ENCODE measurements at regions of chr4 and their contacts with region 1.

Region 1: DNA sequence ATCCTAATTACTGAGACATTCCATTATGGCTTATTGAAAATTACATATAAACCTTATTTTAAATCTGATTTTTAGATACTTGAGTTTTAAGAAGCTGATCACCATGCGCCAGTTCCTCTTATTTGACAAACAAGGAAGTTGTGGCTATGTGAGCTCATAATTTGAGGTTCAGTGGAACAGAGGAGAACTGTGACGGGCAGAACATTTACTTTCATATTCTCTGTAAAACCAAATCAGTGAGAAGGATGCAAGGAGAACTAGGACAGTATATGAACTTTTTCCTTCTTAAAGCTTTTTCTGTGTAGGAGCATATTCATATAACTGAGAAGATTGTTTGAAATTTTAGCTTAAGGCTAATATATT is 25.3 kb downstream of the STIM2 start:
- DNase-seq: peak in 6 of 14 experiments; percentile 10 to 92 (median 60)
- ATAC-seq: peak; percentile 76
- H3K4me3 ChIP-seq: peak overlapping the region; percentile 40
- H3K4me3 Mint-ChIP-seq: peak overlapping the region; percentile 72
- H3K27ac ChIP-seq: peak overlapping the region; percentile 63 to 89
- H3K27ac Mint-ChIP-seq: peak overlapping the region; percentile 92
- H3K4me1 ChIP-seq: peaks cover 25% of the 10 kb centered on the region
- H3K4me1 Mint-ChIP-seq: peaks cover 80% of the 10 kb centered on the region
- H3K27me3 ChIP-seq: no peaks in the 10 kb centered on the region
- H3K27me3 Mint-ChIP-seq: no peaks in the 10 kb centered on the region
- CTCF ChIP-seq: no peak

Region 2: DNA sequence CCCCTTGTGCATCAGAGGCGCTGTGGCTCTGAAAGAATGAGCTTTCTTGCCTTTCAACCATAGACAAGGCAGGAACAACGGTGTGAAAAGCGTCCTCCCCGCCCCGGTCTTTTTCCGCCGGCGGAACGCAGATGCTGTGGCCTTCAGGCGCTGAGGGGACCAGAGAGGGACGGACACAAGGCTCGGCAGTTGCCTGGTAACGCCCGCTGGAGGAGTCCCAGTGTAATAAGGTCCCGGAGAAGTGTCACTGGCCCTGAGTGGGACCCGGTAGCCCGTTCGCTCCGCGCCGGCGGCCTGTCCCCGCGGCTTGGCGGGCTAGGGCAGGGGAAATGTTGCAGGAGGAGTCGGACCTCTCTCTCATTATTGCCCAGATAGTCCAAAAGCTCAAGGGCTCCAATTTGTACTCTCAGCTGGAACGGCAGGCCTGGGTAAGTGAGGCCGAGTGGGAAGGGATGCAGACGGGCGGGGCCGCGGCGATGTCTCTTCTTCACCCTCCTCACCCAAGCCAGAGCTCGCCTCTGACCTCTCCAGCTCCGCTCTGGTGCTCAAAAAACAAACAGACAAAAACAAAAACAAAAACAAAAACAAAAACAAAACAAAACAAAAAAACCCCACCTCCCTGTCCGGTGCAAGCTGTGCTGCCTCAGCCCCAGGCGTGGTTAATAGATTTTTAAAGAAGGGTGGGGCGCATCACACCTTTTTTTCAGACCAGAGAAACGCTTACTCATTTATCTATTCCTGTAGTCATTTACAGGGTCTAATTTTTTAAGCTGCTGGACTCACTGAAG is 301.8 kb before region 1 on chr4 and contains the start of gene TBC1D19:
- CTCF ChIA-PET with region 1: no interaction called
- POLR2A ChIA-PET with region 1: interaction called, 31 read pairs
- intact Hi-C with region 1: no loop called
- DNase-seq: peak; percentile 78 to 93 (median 86)
- ATAC-seq: peak; percentile 87
- H3K4me3 ChIP-seq: peak within 1 kb of the TSS; percentile 76
- H3K4me3 Mint-ChIP-seq: peak within 1 kb of the TSS; percentile 96
- H3K27ac ChIP-seq: peak within 1 kb of the TSS; percentile 81 to 85
- H3K27ac Mint-ChIP-seq: peak within 1 kb of the TSS; percentile 95
- H3K4me1 ChIP-seq: peaks cover 11% of the 10 kb centered on the region
- H3K4me1 Mint-ChIP-seq: peaks cover 28% of the 10 kb centered on the region
- H3K27me3 ChIP-seq: no peaks in the 10 kb centered on the region
- H3K27me3 Mint-ChIP-seq: peaks cover 3% of the 10 kb centered on the region
- CTCF ChIP-seq: no peak
- total RNA-seq, gene TBC1D19: 4.0 to 4.8 TPM

Region 3: GRCh38 chr4:26867914-26868684 is 17.8 kb before region 1 on chr4:
- CTCF ChIA-PET with region 1: interaction called, 21 read pairs
- POLR2A ChIA-PET with region 1: interaction called, 41 read pairs
- intact Hi-C with region 1: loop called (anchors 1 to 2 kb)
- DNase-seq: no peak
- ATAC-seq: no peak
- H3K4me3 ChIP-seq: no peak overlapping the region
- H3K4me3 Mint-ChIP-seq: peak overlapping the region; percentile 54
- H3K27ac ChIP-seq: no peak overlapping the region
- H3K27ac Mint-ChIP-seq: peak overlapping the region; percentile 19
- H3K4me1 ChIP-seq: peaks cover 28% of the 10 kb centered on the region
- H3K4me1 Mint-ChIP-seq: peaks cover 84% of the 10 kb centered on the region
- H3K27me3 ChIP-seq: no peaks in the 10 kb centered on the region
- H3K27me3 Mint-ChIP-seq: no peaks in the 10 kb centered on the region
- CTCF ChIP-seq: no peak

Region 4: GRCh38 chr4:26873391-26874026 is 12.4 kb before region 1 on chr4:
- CTCF ChIA-PET with region 1: interaction called, 21 read pairs
- POLR2A ChIA-PET with region 1: interaction called, 41 read pairs
- intact Hi-C with region 1: loop called in 1 of 2 experiments (anchors 1 kb)
- DNase-seq: peak in 11 of 14 experiments; percentile 25 to 91 (median 47)
- ATAC-seq: peak; percentile 92
- H3K4me3 ChIP-seq: no peak overlapping the region
- H3K4me3 Mint-ChIP-seq: peak overlapping the region; percentile 62
- H3K27ac ChIP-seq: peak overlapping the region; percentile 24 to 49
- H3K27ac Mint-ChIP-seq: peak overlapping the region; percentile 68
- H3K4me1 ChIP-seq: peaks cover 39% of the 10 kb centered on the region
- H3K4me1 Mint-ChIP-seq: peaks cover 86% of the 10 kb centered on the region
- H3K27me3 ChIP-seq: no peaks in the 10 kb centered on the region
- H3K27me3 Mint-ChIP-seq: no peaks in the 10 kb centered on the region
- CTCF ChIP-seq: no peak

Region 5: DNA sequence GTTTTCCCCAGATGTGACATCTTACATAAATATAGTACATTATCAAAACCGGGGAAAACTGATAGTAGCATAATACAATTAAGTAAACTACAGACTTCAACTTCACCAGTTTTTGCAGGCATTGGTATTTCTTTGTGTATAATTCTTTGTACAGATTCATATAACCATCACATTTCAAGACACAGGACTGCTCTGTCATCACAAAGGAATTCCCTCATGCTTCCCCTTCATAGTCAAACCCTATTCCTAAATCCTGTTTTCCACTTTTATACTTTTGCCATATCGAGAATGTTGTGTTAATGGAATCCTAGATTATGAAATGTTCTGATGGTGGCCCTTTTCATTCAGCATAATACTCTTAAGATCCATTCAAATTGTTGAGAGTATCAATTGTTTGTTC is 10.7 kb after region 1 on chr4:
- CTCF ChIA-PET with region 1: interaction called, 3 read pairs
- POLR2A ChIA-PET with region 1: interaction called, 3 read pairs
- intact Hi-C with region 1: loop called in 1 of 2 experiments (anchors 2 kb)
- DNase-seq: no peak
- ATAC-seq: no peak
- H3K4me3 ChIP-seq: no peak overlapping the region
- H3K4me3 Mint-ChIP-seq: no peak overlapping the region
- H3K27ac ChIP-seq: no peak overlapping the region
- H3K27ac Mint-ChIP-seq: no peak overlapping the region
- H3K4me1 ChIP-seq: peaks cover 4% of the 10 kb centered on the region
- H3K4me1 Mint-ChIP-seq: peaks cover 83% of the 10 kb centered on the region
- H3K27me3 ChIP-seq: no peaks in the 10 kb centered on the region
- H3K27me3 Mint-ChIP-seq: no peaks in the 10 kb centered on the region
- CTCF ChIP-seq: no peak

Region 6: DNA sequence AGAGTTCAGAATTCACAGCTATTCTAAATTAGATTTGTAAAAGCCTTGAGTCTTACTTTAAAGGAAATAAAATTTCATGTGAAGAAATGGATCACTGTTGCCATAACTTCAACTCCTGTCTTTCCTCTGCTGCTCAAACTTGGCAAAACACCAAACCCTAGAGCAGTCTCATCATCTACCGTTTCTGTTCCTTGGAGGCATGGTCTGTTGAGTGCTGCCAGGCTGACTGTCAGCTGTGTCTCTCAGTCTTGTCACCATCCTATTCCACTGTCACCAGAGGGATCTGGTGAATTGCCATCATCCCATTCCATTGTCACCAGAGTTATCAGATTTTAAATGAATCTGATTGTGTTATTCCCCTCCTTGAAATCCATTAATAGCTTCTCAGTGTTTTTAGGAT is 30.3 kb after region 1 on chr4:
- CTCF ChIA-PET with region 1: interaction called, 5 read pairs
- POLR2A ChIA-PET with region 1: interaction called, 7 read pairs
- intact Hi-C with region 1: loop called in 1 of 2 experiments (anchors 5 kb)
- DNase-seq: peak in 1 of 14 experiments; percentile 21
- ATAC-seq: peak; percentile 34
- H3K4me3 ChIP-seq: no peak overlapping the region
- H3K4me3 Mint-ChIP-seq: no peak overlapping the region
- H3K27ac ChIP-seq: no peak overlapping the region
- H3K27ac Mint-ChIP-seq: peak overlapping the region; percentile 60
- H3K4me1 ChIP-seq: peaks cover 4% of the 10 kb centered on the region
- H3K4me1 Mint-ChIP-seq: peaks cover 83% of the 10 kb centered on the region
- H3K27me3 ChIP-seq: no peaks in the 10 kb centered on the region
- H3K27me3 Mint-ChIP-seq: no peaks in the 10 kb centered on the region
- CTCF ChIP-seq: no peak

Region 7: GRCh38 chr4:26985873-26986272 is 100.0 kb after region 1 on chr4:
- CTCF ChIA-PET with region 1: interaction called, 3 read pairs
- POLR2A ChIA-PET with region 1: interaction called, 15 read pairs
- intact Hi-C with region 1: no loop called
- DNase-seq: peak in 6 of 14 experiments; percentile 15 to 79 (median 58)
- ATAC-seq: peak; percentile 98
- H3K4me3 ChIP-seq: no peak overlapping the region
- H3K4me3 Mint-ChIP-seq: peak overlapping the region; percentile 26
- H3K27ac ChIP-seq: no peak overlapping the region
- H3K27ac Mint-ChIP-seq: peak overlapping the region; percentile 12
- H3K4me1 ChIP-seq: peaks cover 10% of the 10 kb centered on the region
- H3K4me1 Mint-ChIP-seq: peaks cover 73% of the 10 kb centered on the region
- H3K27me3 ChIP-seq: no peaks in the 10 kb centered on the region
- H3K27me3 Mint-ChIP-seq: no peaks in the 10 kb centered on the region
- CTCF ChIP-seq: no peak

Region 8: DNA sequence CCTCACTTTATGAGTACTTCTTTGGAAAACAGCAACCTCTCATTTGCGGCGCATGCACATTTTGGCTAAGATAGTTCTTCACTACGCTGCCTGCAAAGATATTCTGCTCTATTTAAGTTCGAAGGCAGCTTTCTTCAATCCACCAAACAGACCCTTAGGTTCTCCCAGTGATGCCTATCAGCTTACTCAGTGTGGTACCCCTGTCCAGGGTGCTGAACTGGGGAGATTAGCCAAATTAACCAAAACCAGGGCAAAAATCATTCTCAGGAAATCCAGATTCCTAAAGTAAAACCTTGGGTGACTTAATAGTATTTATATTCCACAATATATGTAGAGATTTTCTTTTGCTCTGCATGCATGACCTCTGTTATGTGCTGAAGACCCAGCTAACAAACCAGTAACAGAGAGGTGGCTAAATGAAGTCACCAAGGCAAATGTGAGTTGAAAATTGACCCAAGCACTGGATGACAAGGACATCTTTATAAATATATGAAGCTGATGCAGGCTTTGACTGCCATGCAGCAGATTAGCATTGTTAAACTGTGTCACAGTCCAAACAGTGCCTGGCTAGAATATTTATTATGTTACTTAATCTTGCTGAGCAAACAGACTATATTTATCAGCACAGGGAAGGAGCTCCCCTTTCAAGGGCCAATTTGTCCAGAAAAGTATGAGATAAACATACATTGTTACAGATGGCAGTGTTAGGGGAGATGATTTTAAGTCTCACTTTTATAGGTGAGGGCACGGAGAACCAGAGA is 392.9 kb after region 1 on chr4:
- CTCF ChIA-PET with region 1: no interaction called
- POLR2A ChIA-PET with region 1: no interaction called
- intact Hi-C with region 1: no loop called
- DNase-seq: no peak
- ATAC-seq: no peak
- H3K4me3 ChIP-seq: no peak overlapping the region
- H3K4me3 Mint-ChIP-seq: no peak overlapping the region
- H3K27ac ChIP-seq: no peak overlapping the region
- H3K27ac Mint-ChIP-seq: no peak overlapping the region
- H3K4me1 ChIP-seq: no peaks in the 10 kb centered on the region
- H3K4me1 Mint-ChIP-seq: no peaks in the 10 kb centered on the region
- H3K27me3 ChIP-seq: no peaks in the 10 kb centered on the region
- H3K27me3 Mint-ChIP-seq: no peaks in the 10 kb centered on the region
- CTCF ChIP-seq: no peak

Region 9: GRCh38 chr4:27484216-27484615 is 598.3 kb after region 1 on chr4:
- CTCF ChIA-PET with region 1: no interaction called
- POLR2A ChIA-PET with region 1: no interaction called
- intact Hi-C with region 1: no loop called
- DNase-seq: no peak
- ATAC-seq: no peak
- H3K4me3 ChIP-seq: no peak overlapping the region
- H3K4me3 Mint-ChIP-seq: no peak overlapping the region
- H3K27ac ChIP-seq: no peak overlapping the region
- H3K27ac Mint-ChIP-seq: no peak overlapping the region
- H3K4me1 ChIP-seq: no peaks in the 10 kb centered on the region
- H3K4me1 Mint-ChIP-seq: no peaks in the 10 kb centered on the region
- H3K27me3 ChIP-seq: no peaks in the 10 kb centered on the region
- H3K27me3 Mint-ChIP-seq: no peaks in the 10 kb centered on the region
- CTCF ChIP-seq: no peak